ENCODE measurements at regions of chr2 and their contacts with region 1.

Region 1: DNA sequence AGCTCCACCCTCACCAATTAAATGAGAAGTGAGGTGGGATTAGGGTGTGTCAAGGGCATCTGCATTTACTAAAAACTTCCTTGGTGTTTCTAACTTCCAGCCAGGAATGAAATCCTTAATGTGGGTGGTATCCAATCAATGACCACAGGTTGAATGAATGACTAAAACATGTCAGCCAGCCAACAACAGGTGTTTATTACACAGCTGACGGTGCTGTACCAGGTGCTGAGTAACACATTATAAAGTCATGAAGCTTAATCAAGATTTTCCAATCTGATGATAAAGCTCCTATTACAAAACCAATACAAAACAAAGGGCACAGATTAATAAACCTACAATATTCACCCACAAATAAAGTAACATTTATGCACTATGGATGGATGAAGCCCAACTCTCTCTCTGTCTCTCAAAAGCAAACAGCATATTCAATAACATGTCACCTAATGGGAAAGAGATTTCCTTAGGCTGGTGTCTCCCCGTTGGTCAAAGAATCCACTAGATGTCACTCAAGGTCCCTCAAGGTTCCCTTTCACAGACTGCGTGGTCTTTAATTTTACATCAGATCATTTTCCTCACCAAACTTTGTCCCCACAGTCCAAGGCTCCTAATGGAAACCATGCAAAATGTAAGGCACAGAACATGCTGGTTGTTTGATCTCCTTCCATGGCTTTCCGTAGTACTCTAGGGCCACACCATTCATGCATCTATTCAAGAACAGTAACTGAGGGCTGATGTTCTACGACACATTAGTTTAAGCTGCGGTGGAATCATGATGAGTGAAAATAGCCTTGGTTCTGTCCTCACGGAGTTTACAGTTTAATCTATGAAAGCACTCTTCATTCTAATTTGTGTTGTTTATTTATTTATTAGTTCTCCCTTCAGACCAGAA is 6.4 kb upstream of the PTPN4 start:
- DNase-seq: no peak

Region 2: GRCh38 chr2:119739580-119740255 is 13.6 kb before region 1 on chr2:
- intact Hi-C with region 1: no loop called
- DNase-seq: no peak

Region 3: GRCh38 chr2:119823734-119824334 is 70.5 kb after region 1 on chr2:
- intact Hi-C with region 1: loop called (anchors 2 kb)
- DNase-seq: no peak

Measured in cardiac septum (tissue), 1 donor.